Caco-2 (cell line): ENCODE measurements at regions of chr5 and their contacts with region 1.

Region 1: DNA sequence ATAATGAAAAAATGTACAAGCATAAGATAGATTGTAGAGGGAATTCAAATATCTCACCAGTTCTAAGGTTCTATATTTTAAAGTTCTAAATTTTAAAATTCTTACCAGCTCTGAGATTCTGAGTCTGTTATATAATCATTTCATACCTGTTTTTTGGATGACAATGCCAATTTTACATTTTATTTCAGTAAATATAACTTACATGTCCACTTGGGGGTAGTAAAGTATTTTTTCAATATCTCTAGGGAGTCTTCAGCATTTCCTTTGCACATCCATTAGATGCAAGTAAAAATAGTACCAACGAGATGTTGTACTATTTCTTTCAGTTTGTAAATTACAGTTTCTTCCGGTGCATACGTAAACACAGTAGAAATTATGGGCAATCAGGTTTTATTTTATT is 25.7 kb downstream of the NMUR2 start:
- DNase-seq: no peak
- H3K4me3 ChIP-seq: no peak overlapping the region
- H3K4me3 Mint-ChIP-seq: no peak overlapping the region
- H3K27ac Mint-ChIP-seq: no peak overlapping the region
- H3K4me1 ChIP-seq: no peaks in the 10 kb centered on the region; the same call in 1 of the 2 replicates
- H3K4me1 Mint-ChIP-seq: no peaks in the 10 kb centered on the region
- H3K27me3 ChIP-seq: no peaks in the 10 kb centered on the region
- H3K27me3 Mint-ChIP-seq: no peaks in the 10 kb centered on the region
- CTCF ChIP-seq: no peak

Region 2: DNA sequence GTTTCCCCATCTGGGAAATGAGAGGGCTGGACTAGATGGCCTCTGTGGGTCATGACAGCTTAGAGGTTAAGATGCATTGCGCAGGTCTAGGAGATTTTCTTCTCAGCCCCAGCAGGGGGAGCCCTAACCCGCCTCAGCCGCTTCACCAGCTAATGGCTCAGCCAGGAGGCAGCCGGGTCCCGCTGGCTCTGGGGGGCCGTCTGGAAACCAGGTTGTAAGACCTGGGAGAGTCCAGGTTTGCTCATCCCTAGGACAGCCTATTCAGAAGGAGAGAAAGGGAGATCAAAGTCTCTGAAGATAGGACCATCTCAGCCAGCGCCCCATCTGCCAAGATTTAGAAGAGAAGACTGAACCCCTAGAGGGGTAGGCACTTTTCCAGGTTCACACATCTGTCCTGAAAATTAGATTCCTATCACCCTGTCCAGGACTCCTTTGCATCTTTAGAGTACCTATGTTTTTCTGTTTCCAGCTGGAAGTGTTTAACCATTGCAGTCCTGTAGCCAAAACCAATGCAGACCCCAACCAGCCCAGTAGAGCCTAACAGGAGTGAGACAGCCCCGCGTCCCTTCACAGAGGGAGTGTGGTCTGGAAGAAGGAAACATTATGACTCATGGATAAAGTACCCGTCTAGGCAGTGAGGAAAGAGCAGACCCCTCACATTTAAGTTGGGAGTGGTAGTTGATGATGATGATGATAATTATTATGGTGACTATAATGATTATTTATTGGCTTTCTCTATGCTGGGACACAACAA is 720.2 kb before region 1 on chr5:
- CTCF ChIA-PET with region 1: no interaction called
- POLR2A ChIA-PET with region 1: no interaction called
- intact Hi-C with region 1: no loop called
- DNase-seq: peak; percentile 84 to 91
- H3K4me3 ChIP-seq: no peak overlapping the region
- H3K4me3 Mint-ChIP-seq: no peak overlapping the region
- H3K27ac Mint-ChIP-seq: no peak overlapping the region
- H3K4me1 ChIP-seq: peaks cover 7% of the 10 kb centered on the region; the same call in 1 of the 2 replicates
- H3K4me1 Mint-ChIP-seq: no peaks in the 10 kb centered on the region
- H3K27me3 ChIP-seq: no peaks in the 10 kb centered on the region
- H3K27me3 Mint-ChIP-seq: no peaks in the 10 kb centered on the region
- CTCF ChIP-seq: peak; percentile 83 to 90

Region 3: GRCh38 chr5:152466085-152466756 is 86.9 kb after region 1 on chr5:
- CTCF ChIA-PET with region 1: interaction called, 5 read pairs
- POLR2A ChIA-PET with region 1: interaction called, 12 read pairs
- intact Hi-C with region 1: loop called (anchors 1 kb)
- DNase-seq: no peak
- H3K4me3 ChIP-seq: no peak overlapping the region
- H3K4me3 Mint-ChIP-seq: no peak overlapping the region
- H3K27ac Mint-ChIP-seq: no peak overlapping the region
- H3K4me1 ChIP-seq: no peaks in the 10 kb centered on the region
- H3K4me1 Mint-ChIP-seq: peaks cover 6% of the 10 kb centered on the region
- H3K27me3 ChIP-seq: no peaks in the 10 kb centered on the region
- H3K27me3 Mint-ChIP-seq: peaks cover 3% of the 10 kb centered on the region
- CTCF ChIP-seq: peak in 1 of 2 experiments; percentile 4

Region 4: DNA sequence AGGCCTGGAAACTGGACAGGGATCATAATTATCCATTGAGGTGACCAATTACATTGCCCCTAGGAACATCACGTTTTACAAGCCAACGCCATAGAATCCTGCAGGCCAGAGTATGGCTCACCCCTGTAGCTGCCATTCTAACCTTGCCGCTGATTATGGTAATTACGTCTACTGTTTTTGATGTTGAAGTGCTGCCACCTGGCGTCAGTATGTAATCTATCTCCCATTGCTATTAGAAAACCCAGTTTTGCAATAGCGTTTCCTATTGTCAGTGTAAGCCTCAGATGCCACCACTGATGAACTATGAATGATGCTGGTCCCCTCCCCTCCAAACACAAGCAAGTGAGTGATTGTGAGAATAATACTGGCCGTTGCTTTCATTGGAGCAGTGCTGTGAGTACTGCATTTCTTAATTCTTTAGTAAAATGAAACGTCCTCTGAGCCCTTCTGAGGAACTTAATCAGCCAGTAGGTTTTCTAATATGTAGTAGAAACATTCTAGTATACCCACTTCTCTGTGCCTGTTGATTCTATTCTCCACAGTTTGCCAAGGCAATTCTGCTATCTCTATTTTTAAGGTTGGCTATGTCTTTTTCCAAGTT is 126.2 kb after region 1 on chr5:
- CTCF ChIA-PET with region 1: interaction called, 3 read pairs
- POLR2A ChIA-PET with region 1: no interaction called
- intact Hi-C with region 1: loop called (anchors 1 kb)
- DNase-seq: peak; percentile 58 to 61
- H3K4me3 ChIP-seq: no peak overlapping the region
- H3K4me3 Mint-ChIP-seq: no peak overlapping the region
- H3K27ac Mint-ChIP-seq: no peak overlapping the region
- H3K4me1 ChIP-seq: no peaks in the 10 kb centered on the region
- H3K4me1 Mint-ChIP-seq: no peaks in the 10 kb centered on the region
- H3K27me3 ChIP-seq: no peaks in the 10 kb centered on the region
- H3K27me3 Mint-ChIP-seq: peaks cover 11% of the 10 kb centered on the region
- CTCF ChIP-seq: peak; percentile 51 to 59

Region 5: DNA sequence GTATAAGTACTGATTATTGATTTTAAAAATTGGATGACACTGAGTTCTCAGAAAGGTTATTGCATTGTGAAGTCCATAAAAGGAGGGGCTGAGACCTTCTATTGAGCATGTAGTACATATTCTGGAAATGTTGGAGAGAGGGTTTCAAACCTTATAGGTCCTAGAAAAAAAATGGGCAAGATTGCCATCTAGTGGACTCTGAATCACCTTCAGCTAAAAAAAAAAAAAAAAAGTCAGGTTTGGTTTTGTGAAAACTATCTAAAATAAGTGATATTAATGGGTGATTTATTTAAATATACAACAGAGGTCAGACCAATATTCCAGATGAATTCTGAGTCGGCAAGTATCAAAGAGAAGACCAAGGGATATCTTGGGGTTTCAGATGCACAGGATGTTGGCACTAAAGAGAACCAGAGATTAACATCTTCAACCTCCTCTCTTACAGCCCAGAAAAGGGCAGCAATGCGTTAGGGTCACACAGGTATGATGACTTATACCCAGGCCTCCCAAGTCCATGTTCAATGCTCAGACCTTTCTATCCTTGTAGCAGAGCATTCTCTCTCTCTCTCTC is 135.6 kb after region 1 on chr5:
- CTCF ChIA-PET with region 1: interaction called, 4 read pairs
- POLR2A ChIA-PET with region 1: no interaction called
- intact Hi-C with region 1: loop called (anchors 1 kb)
- DNase-seq: peak in 1 of 2 experiments; percentile 28
- H3K4me3 ChIP-seq: no peak overlapping the region
- H3K4me3 Mint-ChIP-seq: no peak overlapping the region
- H3K27ac Mint-ChIP-seq: no peak overlapping the region
- H3K4me1 ChIP-seq: no peaks in the 10 kb centered on the region
- H3K4me1 Mint-ChIP-seq: no peaks in the 10 kb centered on the region
- H3K27me3 ChIP-seq: no peaks in the 10 kb centered on the region; the same call in 1 of the 2 replicates
- H3K27me3 Mint-ChIP-seq: peaks cover 16% of the 10 kb centered on the region
- CTCF ChIP-seq: peak; percentile 45 to 65

Region 6: DNA sequence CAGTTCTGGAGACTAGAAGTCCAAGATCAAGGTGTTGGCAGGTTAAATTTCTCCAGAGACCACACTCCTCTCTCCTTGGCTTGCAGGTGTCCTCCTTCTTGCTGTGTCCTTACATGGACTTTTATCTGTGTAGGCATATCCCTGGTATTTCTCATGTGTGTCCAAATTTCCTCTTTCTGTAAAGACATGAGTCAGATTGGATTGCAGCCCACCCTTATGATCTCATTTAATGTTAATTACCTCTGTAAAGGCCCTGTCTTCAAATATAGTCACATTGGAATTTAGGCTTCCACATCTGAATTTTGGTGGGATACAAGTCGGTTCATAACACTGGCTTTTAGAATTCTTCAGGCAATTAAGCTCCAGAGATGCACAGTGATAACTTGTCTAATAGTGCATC is 788.9 kb after region 1 on chr5:
- CTCF ChIA-PET with region 1: no interaction called
- POLR2A ChIA-PET with region 1: no interaction called
- intact Hi-C with region 1: no loop called
- DNase-seq: no peak
- H3K4me3 ChIP-seq: no peak overlapping the region
- H3K4me3 Mint-ChIP-seq: no peak overlapping the region
- H3K27ac Mint-ChIP-seq: no peak overlapping the region
- H3K4me1 ChIP-seq: no peaks in the 10 kb centered on the region
- H3K4me1 Mint-ChIP-seq: no peaks in the 10 kb centered on the region
- H3K27me3 ChIP-seq: no peaks in the 10 kb centered on the region
- H3K27me3 Mint-ChIP-seq: no peaks in the 10 kb centered on the region
- CTCF ChIP-seq: no peak